ENCODE measurements at regions of chr2 and their contacts with region 1.

Region 1: GRCh38 chr2:30026087-30027055 is 105.0 kb upstream of the ALK start:
- DNase-seq: peak; percentile 45 to 67 (median 58)
- ATAC-seq: peak; percentile 98
- H3K4me3 ChIP-seq: no peak overlapping the region
- H3K27ac ChIP-seq: no peak overlapping the region
- H3K4me1 ChIP-seq: no peaks in the 10 kb centered on the region
- H3K27me3 ChIP-seq: peaks cover 0 to 3% of the 10 kb centered on the region in 2 experiments; a peak in 3 of 5 replicates
- CTCF ChIP-seq: peak; percentile 73 to 83 (median 74)
- EP300 ChIP-seq: no peak
- POLR2A ChIP-seq: no peak
- RAD21 ChIP-seq: peak; percentile 44 to 74

Region 2: GRCh38 chr2:29443627-29444026 is 582.7 kb before region 1 on chr2:
- CTCF ChIA-PET with region 1: no interaction called
- POLR2A ChIA-PET with region 1: no interaction called
- in situ Hi-C with region 1: no loop called
- intact Hi-C with region 1: loop called (anchors 5 kb)
- DNase-seq: no peak
- ATAC-seq: no peak
- H3K4me3 ChIP-seq: no peak overlapping the region
- H3K27ac ChIP-seq: no peak overlapping the region
- H3K4me1 ChIP-seq: no peaks in the 10 kb centered on the region
- H3K27me3 ChIP-seq: no peaks in the 10 kb centered on the region
- CTCF ChIP-seq: no peak
- EP300 ChIP-seq: no peak
- POLR2A ChIP-seq: no peak
- RAD21 ChIP-seq: no peak

Region 3: DNA sequence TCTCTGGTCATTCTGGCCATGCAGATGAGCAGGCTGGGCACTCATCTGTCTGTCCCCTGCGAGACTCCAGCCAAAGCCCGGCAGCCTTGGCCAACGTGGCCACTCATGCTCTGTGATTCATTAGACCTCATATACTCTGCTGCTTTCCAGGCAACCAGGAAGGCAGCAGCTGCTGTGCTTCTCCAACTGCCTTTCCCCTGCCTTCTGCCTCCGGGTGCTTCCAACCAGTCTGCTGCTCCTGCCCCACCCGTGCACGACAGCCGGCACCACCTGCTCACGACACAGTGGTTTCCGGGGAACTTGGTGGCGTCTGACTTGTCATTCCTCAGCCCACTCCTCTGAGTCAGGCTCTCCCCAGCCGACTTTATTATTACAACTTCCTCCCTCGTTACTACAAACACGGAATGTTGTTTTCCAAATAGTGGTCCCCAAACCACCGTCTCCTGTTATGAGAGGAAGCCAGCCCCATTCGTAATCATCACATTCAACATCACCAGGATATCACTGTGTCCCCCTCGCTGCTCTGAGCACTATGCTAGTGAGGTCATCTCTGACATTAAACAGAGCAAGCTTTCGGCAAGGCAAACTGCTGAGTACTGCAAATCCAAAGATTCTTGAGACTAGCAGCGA is 497.4 kb before region 1 on chr2:
- CTCF ChIA-PET with region 1: no interaction called
- POLR2A ChIA-PET with region 1: no interaction called
- in situ Hi-C with region 1: no loop called
- intact Hi-C with region 1: no loop called
- DNase-seq: no peak
- ATAC-seq: no peak
- H3K4me3 ChIP-seq: no peak overlapping the region
- H3K27ac ChIP-seq: no peak overlapping the region
- H3K4me1 ChIP-seq: no peaks in the 10 kb centered on the region
- H3K27me3 ChIP-seq: peaks cover 0 to 9% of the 10 kb centered on the region in 2 experiments; a peak in 2 of 5 replicates
- CTCF ChIP-seq: no peak
- EP300 ChIP-seq: no peak
- POLR2A ChIP-seq: no peak
- RAD21 ChIP-seq: no peak

Region 4: DNA sequence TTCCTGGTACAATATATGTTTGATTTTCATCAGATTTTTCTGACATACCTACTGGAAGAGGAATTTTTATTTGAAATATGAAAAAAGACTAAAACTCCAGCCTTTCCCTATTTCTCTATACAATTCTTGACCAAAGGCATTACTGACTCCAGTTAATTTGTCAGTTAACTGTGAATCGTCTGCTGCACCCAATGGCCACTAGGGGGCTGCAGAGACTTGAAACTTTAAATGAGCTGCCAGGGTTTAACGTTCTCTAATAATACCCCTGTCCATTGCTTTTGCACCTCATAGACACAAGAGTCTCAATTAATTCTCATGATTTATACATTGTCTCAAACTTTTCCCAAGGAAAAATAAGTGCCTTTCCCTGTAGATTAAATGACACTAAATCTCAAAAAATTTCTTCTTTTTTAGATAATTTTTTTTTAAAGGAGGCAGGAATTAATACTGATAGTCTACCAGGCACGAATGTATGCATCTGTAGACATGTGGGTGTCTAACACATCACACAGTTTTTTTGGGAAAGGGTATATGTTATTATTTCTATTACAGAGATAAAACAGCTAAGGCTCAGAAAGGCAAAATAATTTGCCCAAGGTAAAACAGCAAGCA is 103.2 kb before region 1 on chr2:
- CTCF ChIA-PET with region 1: interaction called, 10 read pairs
- POLR2A ChIA-PET with region 1: no interaction called
- in situ Hi-C with region 1: no loop called
- intact Hi-C with region 1: loop called (anchors 2 kb)
- DNase-seq: peak; percentile 60 to 70 (median 68)
- ATAC-seq: peak; percentile 36; the same call in 1 of the 3 replicates
- H3K4me3 ChIP-seq: no peak overlapping the region
- H3K27ac ChIP-seq: no peak overlapping the region
- H3K4me1 ChIP-seq: peaks cover 0 to 17% of the 10 kb centered on the region in 2 experiments; a peak in 3 of 5 replicates
- H3K27me3 ChIP-seq: peaks cover 3 to 15% of the 10 kb centered on the region in 2 experiments; a peak in 3 of 5 replicates
- CTCF ChIP-seq: peak; percentile 71 to 85 (median 83)
- EP300 ChIP-seq: no peak
- POLR2A ChIP-seq: no peak
- RAD21 ChIP-seq: peak; percentile 51 to 68

Region 5: DNA sequence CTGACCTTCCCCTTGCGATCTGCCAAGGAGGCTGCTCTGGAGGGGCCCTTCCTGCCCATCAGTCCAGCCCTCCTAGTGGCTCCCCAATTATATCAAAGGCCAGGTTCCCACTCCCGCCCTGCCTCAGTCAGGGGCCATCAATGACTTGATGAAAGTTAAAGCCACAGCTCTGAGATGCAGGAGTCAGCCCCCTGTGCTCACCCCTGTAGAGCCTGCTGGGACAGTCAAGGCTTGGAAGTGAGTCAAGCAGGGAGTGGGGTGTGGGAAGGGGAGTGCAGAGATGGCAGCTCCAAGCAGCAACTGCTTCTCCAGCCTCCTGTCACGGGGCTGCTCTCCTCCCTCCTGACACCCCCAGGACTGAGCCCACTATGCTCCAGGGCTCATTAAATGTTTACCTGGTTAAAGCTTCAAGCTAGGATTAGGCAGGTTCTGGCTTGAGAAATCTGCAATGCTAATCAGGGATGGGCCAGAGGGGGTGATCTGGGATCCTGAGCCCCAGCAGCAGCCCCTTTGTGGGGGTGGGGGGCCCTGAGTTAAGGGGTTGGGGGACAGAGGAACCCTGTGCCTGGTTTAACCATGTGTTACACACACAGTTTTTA is 62.3 kb before region 1 on chr2:
- CTCF ChIA-PET with region 1: no interaction called
- POLR2A ChIA-PET with region 1: no interaction called
- in situ Hi-C with region 1: no loop called
- intact Hi-C with region 1: no loop called
- DNase-seq: no peak
- ATAC-seq: no peak
- H3K4me3 ChIP-seq: no peak overlapping the region
- H3K27ac ChIP-seq: no peak overlapping the region
- H3K4me1 ChIP-seq: no peaks in the 10 kb centered on the region
- H3K27me3 ChIP-seq: peaks cover 0 to 8% of the 10 kb centered on the region in 2 experiments; a peak in 2 of 5 replicates
- CTCF ChIP-seq: no peak
- EP300 ChIP-seq: no peak
- POLR2A ChIP-seq: no peak
- RAD21 ChIP-seq: no peak

Region 6: DNA sequence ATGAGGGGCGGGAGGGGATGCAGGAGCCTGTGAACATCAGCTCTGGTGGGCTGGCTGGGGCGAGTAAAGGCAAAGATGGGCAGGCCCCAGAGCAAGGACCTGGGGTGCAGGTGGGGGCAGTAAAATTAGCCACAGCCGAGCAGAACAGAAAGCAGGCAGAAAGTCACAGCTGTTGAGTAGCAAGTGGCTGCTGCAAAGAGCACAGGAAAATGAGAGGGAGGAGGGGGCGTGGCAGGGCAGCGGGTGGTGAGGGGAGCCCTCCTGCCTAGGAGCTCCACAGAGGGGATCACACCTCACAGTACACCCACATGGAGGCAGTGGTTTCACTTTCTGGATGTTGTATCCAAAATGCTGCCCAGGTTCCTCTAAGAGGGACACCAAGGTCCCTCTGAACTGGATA is 284.6 kb after region 1 on chr2:
- CTCF ChIA-PET with region 1: no interaction called
- POLR2A ChIA-PET with region 1: no interaction called
- in situ Hi-C with region 1: no loop called
- intact Hi-C with region 1: no loop called
- DNase-seq: no peak
- ATAC-seq: no peak; the same call in 2 of the 3 replicates
- H3K4me3 ChIP-seq: no peak overlapping the region
- H3K27ac ChIP-seq: no peak overlapping the region
- H3K4me1 ChIP-seq: peaks cover 4 to 19% of the 10 kb centered on the region in 2 experiments; a peak in 4 of 5 replicates
- H3K27me3 ChIP-seq: no peaks in the 10 kb centered on the region
- CTCF ChIP-seq: no peak
- EP300 ChIP-seq: no peak
- POLR2A ChIP-seq: no peak
- RAD21 ChIP-seq: no peak

Measured in K562 (cell line).